HAP-1 (cell line): ENCODE measurements at regions of chr17 and their contacts with region 1.

Region 1: GRCh38 chr17:48543107-48543853 is 1.6 kb downstream of the HOXB2 start:
- DNase-seq: peak; percentile 26 to 64
- H3K4me3 ChIP-seq: peak overlapping the region; percentile 68
- H3K4me1 ChIP-seq: peaks cover 39% of the 10 kb centered on the region
- H3K27me3 ChIP-seq: no peaks in the 10 kb centered on the region

Region 2: GRCh38 chr17:48577946-48578615 is 34.8 kb after region 1 on chr17 and contains the start of gene HOXB4:
- in situ Hi-C with region 1: loop called (anchors 5 kb)
- DNase-seq: peak; percentile 81 to 89
- H3K4me3 ChIP-seq: peak within 1 kb of the TSS; percentile 58
- H3K4me1 ChIP-seq: peaks cover 24% of the 10 kb centered on the region
- H3K27me3 ChIP-seq: no peaks in the 10 kb centered on the region